Spleen (tissue), 13 donors: ENCODE measurements at regions of chr10 and their contacts with region 1.

Region 1: DNA sequence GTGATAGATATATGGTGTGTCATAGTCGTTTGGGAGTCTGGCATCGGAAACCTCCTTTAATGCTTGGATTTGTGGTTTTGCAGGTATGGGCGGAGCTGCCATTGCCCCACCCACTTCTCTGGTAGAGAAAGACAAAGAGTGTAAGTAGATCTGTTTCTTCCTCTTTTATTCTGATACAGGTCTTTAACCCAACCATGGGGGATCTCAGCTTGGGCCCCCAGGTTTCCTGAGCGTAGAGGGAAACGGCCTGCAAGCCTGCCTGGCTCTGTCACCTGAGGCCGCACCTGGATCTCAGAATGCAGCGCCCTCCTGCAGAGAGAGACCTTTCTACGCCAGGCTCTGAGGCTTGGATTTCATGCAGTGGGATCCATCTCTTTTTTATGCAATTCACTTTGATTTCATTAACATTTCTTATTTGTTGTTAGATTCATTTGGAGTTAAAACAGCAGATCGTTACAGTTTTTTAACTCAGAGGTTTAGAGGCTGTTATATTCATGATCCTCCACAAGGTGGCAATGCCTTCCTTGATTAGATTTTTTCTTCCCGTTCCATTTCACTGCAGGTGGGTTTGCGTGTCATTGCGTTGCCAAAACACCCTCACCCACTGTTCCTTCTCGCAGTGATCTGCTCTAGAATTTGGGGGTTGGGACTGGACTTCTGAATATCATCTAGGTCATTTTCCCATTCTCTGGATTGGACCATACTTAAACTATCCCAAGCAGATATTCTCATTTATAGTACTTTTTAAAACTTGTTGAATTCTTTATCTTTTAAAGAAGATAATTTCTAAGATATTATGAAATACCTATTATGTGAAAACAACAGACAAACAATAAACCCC is 20.0 kb downstream of the RBM17 start:
- DNase-seq: no peak
- H3K4me3 ChIP-seq: no peak overlapping the region
- H3K27ac ChIP-seq: peak overlapping the region in 3 of 8 donors; percentile 4 to 37 (median 16)
- H3K4me1 ChIP-seq: peaks cover 5 to 34% (median 15%) of the 10 kb centered on the region in 6 donors
- H3K27me3 ChIP-seq: no peaks in the 10 kb centered on the region
- CTCF ChIP-seq: peak in 10 of 11 experiments; percentile 59 to 94 (median 81)
- POLR2A ChIP-seq: no peak

Region 2: GRCh38 chr10:5917305-5917704 is 191.5 kb before region 1 on chr10:
- intact Hi-C with region 1: no loop called
- DNase-seq: no peak
- H3K4me3 ChIP-seq: no peak overlapping the region
- H3K27ac ChIP-seq: no peak overlapping the region
- H3K4me1 ChIP-seq: no peaks in the 10 kb centered on the region
- H3K27me3 ChIP-seq: no peaks in the 10 kb centered on the region
- CTCF ChIP-seq: no peak
- POLR2A ChIP-seq: no peak

Region 3: DNA sequence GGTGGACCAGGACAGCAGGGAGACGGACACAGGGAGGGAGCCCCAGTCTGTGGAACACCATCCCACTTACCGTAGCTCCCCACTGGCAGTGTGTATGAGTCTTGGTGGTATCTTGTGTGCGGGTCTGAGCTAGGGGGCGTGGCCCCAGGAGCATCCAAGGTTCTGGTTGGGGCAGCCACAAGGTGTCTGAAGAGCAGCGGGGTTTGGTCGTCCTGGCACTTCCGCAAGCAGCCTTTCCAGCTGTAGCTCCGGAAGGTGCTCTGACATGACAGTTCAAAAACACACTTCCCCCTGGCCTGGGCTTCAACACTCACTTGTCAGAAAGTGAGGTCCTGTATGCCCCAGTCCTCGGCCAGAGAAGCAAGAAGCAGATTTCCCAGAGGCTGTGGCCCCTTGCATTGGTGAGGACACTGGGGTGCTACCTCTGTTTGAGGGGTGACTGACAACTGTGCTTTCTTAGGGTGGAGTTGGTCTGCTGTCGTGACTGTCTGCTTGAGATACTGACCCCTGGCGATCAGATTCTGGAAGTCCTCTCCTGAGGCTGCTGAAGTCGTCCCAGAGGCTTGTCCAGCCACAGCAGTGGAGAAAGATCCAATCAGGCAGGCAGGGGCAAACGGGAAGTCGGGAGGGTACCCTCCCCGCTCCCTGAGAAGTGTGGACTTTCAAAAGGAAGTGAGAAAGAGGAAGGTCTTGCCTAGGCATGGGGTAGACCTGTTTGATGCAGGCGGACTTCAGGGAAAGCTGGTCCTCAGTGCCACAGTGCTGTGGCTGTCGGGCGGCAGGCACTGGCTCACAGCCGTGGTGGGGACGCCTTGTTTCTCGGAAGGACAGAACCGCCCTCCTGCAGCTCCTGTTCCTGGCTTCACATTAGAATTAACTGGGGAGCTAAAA is 42.5 kb after region 1 on chr10:
- intact Hi-C with region 1: loop called (anchors 5 kb)
- DNase-seq: peak; percentile 91
- H3K4me3 ChIP-seq: peak overlapping the region in 7 of 8 donors; percentile 6 to 61 (median 21)
- H3K27ac ChIP-seq: peak overlapping the region; percentile 72 to 97 (median 90)
- H3K4me1 ChIP-seq: peaks cover 34 to 84% (median 60%) of the 10 kb centered on the region in 6 donors
- H3K27me3 ChIP-seq: no peaks in the 10 kb centered on the region
- CTCF ChIP-seq: peak; percentile 48 to 81 (median 72)
- POLR2A ChIP-seq: no peak

Region 4: DNA sequence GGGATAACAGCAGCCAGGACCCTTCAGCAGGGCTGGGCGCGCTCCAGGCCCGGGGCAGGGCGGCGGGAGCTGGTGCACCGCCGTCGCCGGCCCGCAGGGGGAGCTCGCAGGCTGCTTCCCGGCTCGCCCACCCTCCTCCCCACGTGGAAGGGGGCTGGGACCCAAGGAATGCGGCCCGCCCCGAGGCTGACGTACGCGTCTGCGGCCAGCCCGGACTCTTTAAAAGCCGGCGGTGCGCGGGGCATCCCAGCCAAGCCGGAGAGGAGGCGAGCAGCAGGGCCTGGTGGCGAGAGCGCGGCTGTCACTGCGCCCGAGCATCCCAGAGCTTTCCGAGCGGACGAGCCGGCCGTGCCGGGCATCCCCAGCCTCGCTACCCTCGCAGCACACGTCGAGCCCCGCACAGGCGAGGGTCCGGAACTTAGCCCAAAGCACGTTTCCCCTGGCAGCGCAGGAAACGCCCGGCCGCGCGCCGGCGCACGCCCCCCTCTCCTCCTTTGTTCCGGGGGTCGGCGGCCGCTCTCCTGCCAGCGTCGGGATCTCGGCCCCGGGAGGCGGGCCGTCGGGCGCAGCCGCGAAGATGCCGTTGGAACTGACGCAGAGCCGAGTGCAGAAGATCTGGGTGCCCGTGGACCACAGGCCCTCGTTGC is 94.0 kb after region 1 on chr10 and contains the start of gene PFKFB3:
- intact Hi-C with region 1: loop called (anchors 10 kb)
- DNase-seq: peak; percentile 98
- H3K4me3 ChIP-seq: peak within 1 kb of the TSS; percentile 53 to 97 (median 77)
- H3K27ac ChIP-seq: peak within 1 kb of the TSS; percentile 68 to 99 (median 95)
- H3K4me1 ChIP-seq: peaks cover 20 to 79% (median 46%) of the 10 kb centered on the region in 6 donors
- H3K27me3 ChIP-seq: no peaks in the 10 kb centered on the region
- CTCF ChIP-seq: peak; percentile 97 to 100 (median 99)
- POLR2A ChIP-seq: peak; percentile 84 to 95 (median 93)
- total RNA-seq, gene PFKFB3: 74.2 to 227 (median 145) TPM

Region 5: DNA sequence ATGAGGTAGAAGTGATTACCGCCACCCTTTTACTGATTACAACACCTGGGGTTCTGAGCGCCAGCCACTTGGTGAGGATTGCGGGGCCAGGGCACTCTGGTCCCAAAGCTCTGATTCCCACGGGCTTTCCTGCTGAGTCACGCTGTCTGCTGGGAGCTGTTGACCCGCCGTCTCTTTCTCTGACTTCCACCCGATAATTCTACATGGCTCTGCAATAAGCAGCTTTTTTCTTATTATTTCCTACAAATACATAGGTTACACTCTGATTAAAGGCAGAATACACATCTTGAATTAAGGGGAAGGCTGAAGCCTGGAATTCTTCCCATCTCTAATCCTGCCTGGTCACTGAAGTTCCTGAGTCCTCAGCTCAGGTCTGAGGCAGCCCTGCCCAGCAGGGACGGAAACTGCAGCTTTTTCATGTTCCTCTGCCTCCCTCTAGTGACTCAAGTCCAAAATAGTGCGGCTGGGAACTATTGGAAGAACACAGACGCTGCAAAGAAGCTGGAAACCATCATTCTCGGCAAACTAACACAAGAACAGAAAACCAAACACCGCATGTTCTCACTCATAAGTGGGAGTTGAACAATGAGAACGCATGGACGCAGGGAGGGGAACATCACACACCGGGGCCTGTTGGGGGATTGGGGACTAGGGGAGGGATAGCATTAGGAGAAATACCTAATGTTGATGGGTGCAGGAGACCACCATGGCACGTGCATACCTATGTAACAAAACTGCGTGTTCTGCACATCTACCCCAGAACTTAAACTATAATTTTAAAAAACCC is 292.9 kb after region 1 on chr10:
- intact Hi-C with region 1: loop called (anchors 5 kb)
- DNase-seq: peak; percentile 85
- H3K4me3 ChIP-seq: peak overlapping the region in 5 of 8 donors; percentile 2 to 48 (median 11)
- H3K27ac ChIP-seq: peak overlapping the region in 7 of 8 donors; percentile 33 to 89 (median 83)
- H3K4me1 ChIP-seq: peaks cover 5 to 53% (median 28%) of the 10 kb centered on the region in 6 donors
- H3K27me3 ChIP-seq: no peaks in the 10 kb centered on the region
- CTCF ChIP-seq: peak; percentile 71 to 92 (median 84)
- POLR2A ChIP-seq: no peak